Caco-2 (cell line): ENCODE measurements at regions of chr4 and their contacts with region 1.

Region 1: DNA sequence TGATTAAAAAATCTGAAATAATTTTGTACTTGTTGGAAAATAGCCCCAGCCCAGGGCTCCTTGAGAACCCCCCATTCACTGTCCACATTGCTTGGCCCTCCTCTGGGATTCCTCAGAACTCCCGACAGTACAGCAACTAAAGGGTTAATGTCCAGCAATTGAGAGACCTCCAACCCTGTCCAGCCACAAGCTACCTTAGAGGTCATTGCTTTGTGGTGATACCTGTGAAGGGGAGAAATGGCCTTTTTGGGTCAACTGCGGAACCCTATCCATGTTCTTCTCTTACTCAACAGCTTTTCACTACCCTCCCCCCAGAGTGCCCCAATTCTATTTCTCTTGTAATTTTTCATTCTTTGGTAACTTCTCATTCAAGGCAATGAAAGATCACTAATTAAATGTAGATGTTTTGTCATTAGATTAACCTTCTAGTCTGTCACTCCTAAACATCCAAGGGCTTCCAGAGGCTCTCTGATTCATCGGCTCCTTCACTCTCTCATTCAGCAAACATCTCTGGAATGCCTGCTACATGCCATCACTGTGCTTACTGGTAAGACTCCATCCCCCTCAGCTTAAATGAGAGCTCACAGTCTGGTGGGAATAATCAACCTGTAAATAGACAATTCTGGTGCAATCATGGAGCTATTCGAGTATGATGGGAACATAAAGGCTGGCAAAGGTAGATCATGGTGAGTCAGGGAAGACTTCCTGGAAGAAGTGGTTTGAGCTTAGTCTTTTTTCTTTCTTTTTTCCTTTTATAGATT is 241.4 kb upstream of the PGRMC2 start:
- DNase-seq: peak; percentile 69 to 80
- H3K4me3 ChIP-seq: no peak overlapping the region
- H3K4me3 Mint-ChIP-seq: peak overlapping the region; percentile 46
- H3K27ac Mint-ChIP-seq: peak overlapping the region; percentile 95
- H3K4me1 ChIP-seq: peaks cover 49% of the 10 kb centered on the region
- H3K4me1 Mint-ChIP-seq: peaks cover 37% of the 10 kb centered on the region
- H3K27me3 ChIP-seq: no peaks in the 10 kb centered on the region
- H3K27me3 Mint-ChIP-seq: no peaks in the 10 kb centered on the region
- CTCF ChIP-seq: no peak

Region 2: GRCh38 chr4:128256539-128256938 is 272.4 kb before region 1 on chr4:
- CTCF ChIA-PET with region 1: no interaction called
- POLR2A ChIA-PET with region 1: no interaction called
- intact Hi-C with region 1: no loop called
- DNase-seq: no peak
- H3K4me3 ChIP-seq: no peak overlapping the region
- H3K4me3 Mint-ChIP-seq: no peak overlapping the region
- H3K27ac Mint-ChIP-seq: no peak overlapping the region
- H3K4me1 ChIP-seq: peaks cover 19% of the 10 kb centered on the region
- H3K4me1 Mint-ChIP-seq: peaks cover 20% of the 10 kb centered on the region
- H3K27me3 ChIP-seq: no peaks in the 10 kb centered on the region
- H3K27me3 Mint-ChIP-seq: no peaks in the 10 kb centered on the region
- CTCF ChIP-seq: no peak

Region 3: GRCh38 chr4:128553686-128554515 is 24.9 kb after region 1 on chr4:
- CTCF ChIA-PET with region 1: interaction called, 3 read pairs
- POLR2A ChIA-PET with region 1: interaction called, 10 read pairs
- intact Hi-C with region 1: loop called (anchors 1 kb)
- DNase-seq: peak in 1 of 2 experiments; percentile 25
- H3K4me3 ChIP-seq: peak overlapping the region; percentile 63
- H3K4me3 Mint-ChIP-seq: peak overlapping the region; percentile 99
- H3K27ac Mint-ChIP-seq: peak overlapping the region; percentile 98
- H3K4me1 ChIP-seq: peaks cover 19% of the 10 kb centered on the region
- H3K4me1 Mint-ChIP-seq: peaks cover 11% of the 10 kb centered on the region
- H3K27me3 ChIP-seq: no peaks in the 10 kb centered on the region
- H3K27me3 Mint-ChIP-seq: no peaks in the 10 kb centered on the region
- CTCF ChIP-seq: no peak

Region 4: GRCh38 chr4:128565565-128566186 is 36.7 kb after region 1 on chr4:
- CTCF ChIA-PET with region 1: no interaction called
- POLR2A ChIA-PET with region 1: no interaction called
- intact Hi-C with region 1: loop called (anchors 1 kb)
- DNase-seq: peak; percentile 62 to 70
- H3K4me3 ChIP-seq: no peak overlapping the region
- H3K4me3 Mint-ChIP-seq: no peak overlapping the region
- H3K27ac Mint-ChIP-seq: no peak overlapping the region
- H3K4me1 ChIP-seq: peaks cover 28% of the 10 kb centered on the region
- H3K4me1 Mint-ChIP-seq: peaks cover 43% of the 10 kb centered on the region
- H3K27me3 ChIP-seq: no peaks in the 10 kb centered on the region
- H3K27me3 Mint-ChIP-seq: no peaks in the 10 kb centered on the region
- CTCF ChIP-seq: peak; percentile 40 to 69